Right ventricle myocardium inferior (tissue), 1 donor: ENCODE measurements at regions of chr4 and their contacts with region 1.

Region 1: DNA sequence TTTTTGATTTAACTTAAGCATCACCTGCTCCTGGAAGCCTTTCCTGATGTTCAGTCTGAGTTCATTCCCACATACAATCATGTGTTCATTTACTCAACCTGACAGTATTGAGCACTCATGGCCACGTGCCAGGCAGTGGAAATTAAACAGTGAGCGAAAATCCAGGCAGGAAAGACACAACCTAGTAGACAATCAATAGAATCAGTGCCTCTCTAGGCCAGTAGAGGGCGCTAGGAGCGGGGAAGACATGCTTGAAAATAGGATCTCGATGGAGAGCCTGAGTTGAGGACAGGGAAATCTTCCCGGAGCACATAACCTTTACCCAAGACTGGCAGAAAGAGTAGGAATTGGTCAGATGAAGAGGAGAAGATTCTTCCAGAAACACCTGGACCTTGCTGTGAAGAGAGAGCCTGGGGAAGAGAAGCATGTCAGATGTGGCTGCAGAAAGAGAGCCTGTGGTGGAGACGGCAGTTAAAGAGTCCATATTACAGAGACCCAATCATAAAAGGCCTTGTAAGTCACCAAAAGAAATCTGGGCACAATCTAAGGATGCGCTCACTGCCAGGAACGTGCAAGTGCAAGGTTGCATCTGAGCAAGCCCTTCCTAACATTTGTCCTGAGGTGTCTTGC is 103.5 kb downstream of the LDB2 start:
- DNase-seq: no peak
- ATAC-seq: peak; percentile 52

Region 2: DNA sequence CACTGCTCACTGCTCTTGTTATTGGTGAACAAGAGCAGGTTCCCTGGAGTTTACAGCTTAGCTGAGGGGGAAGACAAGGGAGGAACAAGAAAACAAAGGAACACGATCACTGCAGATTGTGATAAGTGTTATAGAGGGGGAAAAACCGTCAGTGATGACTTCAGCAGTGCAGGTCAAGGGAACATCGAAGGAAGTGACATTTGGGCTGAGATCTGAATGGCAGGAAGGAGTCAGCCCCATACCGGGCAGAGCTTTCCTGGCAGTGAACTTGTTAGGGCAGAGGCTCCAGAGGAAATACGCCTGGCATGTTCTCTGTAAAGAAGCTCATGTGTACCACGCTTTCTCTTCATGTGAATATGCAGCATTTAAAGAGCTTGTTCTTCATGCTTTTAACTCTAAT is 25.4 kb after region 1 on chr4:
- intact Hi-C with region 1: no loop called
- DNase-seq: no peak
- ATAC-seq: no peak

Region 3: DNA sequence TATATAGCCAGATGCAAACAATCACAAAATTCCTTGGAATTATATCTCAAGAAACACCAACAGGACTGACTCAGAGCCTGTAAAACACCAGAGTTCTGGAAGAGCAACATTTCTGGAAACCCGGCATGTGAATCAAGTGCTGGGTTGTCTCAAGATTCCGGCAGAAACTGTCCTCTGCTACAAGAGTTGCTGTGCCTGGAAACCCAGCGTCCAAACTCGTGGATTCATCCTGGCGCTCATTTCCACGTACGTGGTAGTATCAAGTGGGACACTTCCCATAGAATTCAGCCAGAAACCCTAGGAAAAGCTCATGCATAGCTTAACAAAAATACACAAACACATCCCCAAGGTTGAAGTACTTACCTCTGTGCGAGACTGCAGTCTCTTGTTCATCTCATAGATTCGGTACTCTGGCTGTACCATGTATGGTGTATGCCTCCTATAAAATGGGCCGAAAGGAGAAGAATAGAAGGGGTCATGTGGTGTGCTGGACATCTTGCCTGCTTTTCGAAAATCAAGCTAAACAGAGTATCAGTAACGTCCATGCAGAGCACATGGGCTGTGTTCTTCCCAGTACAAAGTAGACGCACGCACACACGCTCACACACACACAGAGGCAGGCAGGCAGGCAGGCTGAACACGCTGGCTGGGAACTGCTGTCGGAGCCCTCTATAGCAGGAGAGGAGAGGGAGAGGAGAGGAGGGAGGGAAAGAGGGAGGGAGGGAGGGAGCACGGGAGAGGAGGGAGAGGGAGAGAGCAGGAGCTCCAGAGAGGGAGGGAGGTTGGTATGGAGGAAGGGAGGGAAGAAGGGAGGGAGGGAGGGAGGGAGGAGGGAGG is 103.3 kb after region 1 on chr4 and contains the start of gene LDB2:
- intact Hi-C with region 1: loop called (anchors 5 kb)
- DNase-seq: peak; percentile 87
- ATAC-seq: peak; percentile 93
- total RNA-seq, gene LDB2: 34.3 TPM